Ovary (tissue), 10 donors: ENCODE measurements at regions of chr20 and their contacts with region 1.

Region 1: GRCh38 chr20:17611540-17612286 is 41.8 kb downstream of the DSTN start:
- DNase-seq: peak in 3 of 5 donors; percentile 32 to 42 (median 41)
- H3K4me3 ChIP-seq: no peak overlapping the region
- H3K27ac ChIP-seq: peak overlapping the region; percentile 3 to 48
- H3K4me1 ChIP-seq: peaks cover 17% of the 10 kb centered on the region
- H3K27me3 ChIP-seq: no peaks in the 10 kb centered on the region
- CTCF ChIP-seq: no peak
- EP300 ChIP-seq: no peak
- POLR2A ChIP-seq: no peak

Region 2: GRCh38 chr20:17569616-17570346 is 41.9 kb before region 1 on chr20 and contains the start of gene DSTN:
- intact Hi-C with region 1: loop called in 2 of 4 experiments (anchors 5 kb)
- DNase-seq: peak; percentile 95 to 98 (median 96)
- H3K4me3 ChIP-seq: peak within 1 kb of the TSS; percentile 89
- H3K27ac ChIP-seq: peak within 1 kb of the TSS; percentile 94 to 95
- H3K4me1 ChIP-seq: peaks cover 5% of the 10 kb centered on the region
- H3K27me3 ChIP-seq: no peaks in the 10 kb centered on the region
- CTCF ChIP-seq: no peak
- EP300 ChIP-seq: peak; percentile 36
- POLR2A ChIP-seq: peak; percentile 97
- total RNA-seq, gene DSTN: 162 to 429 (median 299) TPM